Head of caudate nucleus (tissue), 42 donors: ENCODE measurements at regions of chr22 and their contacts with region 1.

Region 1: DNA sequence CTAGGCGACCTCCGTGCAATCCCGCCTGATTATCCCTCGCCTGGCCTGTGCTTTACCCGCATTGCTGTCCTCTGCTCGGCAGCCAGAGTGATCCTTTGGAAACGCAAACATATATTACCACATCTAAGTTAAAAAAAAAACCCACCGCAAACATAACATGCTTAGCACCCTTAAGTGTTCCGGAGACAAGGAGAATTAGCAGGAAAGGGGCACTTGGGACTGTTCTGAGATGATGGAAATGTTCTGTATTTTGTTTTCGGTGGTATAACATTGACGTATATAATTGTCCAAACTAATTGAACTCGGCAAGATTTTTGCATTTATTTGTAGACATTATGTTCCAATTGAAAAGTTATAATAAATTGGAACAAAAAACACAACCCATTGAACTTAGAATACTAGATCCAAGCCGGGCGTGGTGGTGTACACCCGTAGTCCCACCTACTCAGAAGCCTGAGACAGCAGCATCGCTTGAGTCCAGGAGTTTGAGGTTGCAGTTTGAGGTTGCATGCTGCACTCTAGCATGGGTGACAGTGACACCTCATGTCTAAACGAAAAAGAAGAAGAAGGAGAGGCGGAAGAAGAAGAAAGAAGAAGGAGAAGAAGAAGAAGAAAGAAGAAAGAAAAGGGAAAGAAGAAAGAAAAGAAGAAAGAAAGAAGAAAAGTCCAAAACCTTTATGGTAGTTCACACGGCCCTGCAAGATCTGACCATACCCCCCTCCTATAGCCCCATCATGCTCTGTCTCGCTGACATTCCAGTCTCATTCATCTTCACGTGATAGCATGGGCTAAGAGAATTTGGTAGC is 604 bp upstream of the POLR3H start:
- DNase-seq: peak in 2 of 42 donors; percentile 28 to 48

Region 2: GRCh38 chr22:41367039-41367679 is 177.7 kb before region 1 on chr22:
- intact Hi-C with region 1: no loop called
- DNase-seq: peak; percentile 93 to 99 (median 98)

Region 3: GRCh38 chr22:41589391-41590241 is 44.7 kb after region 1 on chr22 and contains the start of gene PMM1:
- intact Hi-C with region 1: loop called (anchors 5 kb)
- DNase-seq: peak; percentile 99 to 100 (median 100)